ENCODE measurements at regions of chr17 and their contacts with region 1.

Region 1: DNA sequence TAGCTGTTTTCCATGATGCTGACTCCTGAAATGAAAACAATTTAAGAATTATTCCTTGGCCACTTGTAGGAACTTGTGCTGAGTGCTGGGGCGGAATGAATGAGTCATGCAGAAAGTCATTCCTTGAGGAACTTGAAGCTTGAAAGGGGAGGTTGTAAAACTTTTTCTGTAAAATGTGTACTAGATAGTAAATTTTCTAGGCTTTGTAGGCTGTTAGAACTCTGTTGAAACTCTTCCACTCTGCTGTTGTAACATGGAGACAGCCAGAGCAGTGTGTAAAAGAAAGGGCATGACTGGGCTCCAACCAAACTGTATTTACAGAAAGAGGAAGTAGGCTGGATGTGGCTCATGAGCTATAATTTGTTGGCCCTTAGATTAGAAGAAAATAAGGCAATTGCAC is 46.1 kb downstream of the ABCA8 start:
- DNase-seq: no peak

Region 2: DNA sequence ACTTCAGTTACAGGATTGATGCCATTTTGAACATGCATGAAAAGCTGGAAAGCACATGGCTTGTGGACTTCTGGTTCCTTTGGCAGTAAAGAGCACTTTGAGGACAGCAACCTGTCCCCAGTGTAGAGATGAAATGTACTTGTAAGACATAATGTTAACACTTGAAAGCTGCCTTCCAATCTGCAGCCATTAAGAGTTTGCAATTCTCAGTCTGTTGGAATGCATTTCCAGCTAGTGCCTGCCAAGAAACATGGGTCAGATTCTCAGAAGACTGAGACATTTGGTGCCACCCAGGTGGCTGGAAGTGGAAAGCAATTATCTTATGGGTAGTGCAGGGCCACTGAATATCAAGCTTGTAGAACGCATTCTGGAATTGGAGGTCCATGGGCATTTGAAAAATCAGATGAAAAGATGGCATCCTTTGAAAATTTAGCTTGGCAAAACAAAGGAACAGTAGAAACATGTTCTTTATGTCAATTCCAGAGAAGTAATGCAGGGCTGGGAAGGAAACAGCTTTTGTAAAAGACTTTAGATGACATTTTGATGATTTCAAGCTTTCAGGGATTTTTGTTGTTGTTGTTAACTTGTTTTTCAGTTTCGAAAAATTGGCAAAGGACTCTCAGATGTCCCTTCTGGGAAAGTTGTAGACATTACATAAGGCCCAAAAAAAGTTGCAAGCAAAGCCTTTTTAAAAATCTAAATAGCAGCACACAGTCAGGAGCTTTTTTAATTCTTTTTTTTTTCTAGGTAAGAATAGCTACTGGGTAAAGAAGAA is 100.9 kb before region 1 on chr17:
- intact Hi-C with region 1: loop called (anchors 10 kb)
- DNase-seq: no peak

Region 3: GRCh38 chr17:68993112-68993511 is 84.0 kb after region 1 on chr17:
- intact Hi-C with region 1: no loop called
- DNase-seq: no peak

Measured in cardiac septum (tissue), 1 donor.